Activated CD4-positive, alpha-beta T cell treated with anti-CD3 and anti-CD28 coated beads for 36 hours (primary cell): ENCODE measurements at regions of chr2 and their contacts with region 1.

Region 1: GRCh38 chr2:128090945-128091725 is at the start of gene UGGT1:
- DNase-seq: peak; percentile 96
- ATAC-seq: peak; percentile 95
- H3K4me3 Mint-ChIP-seq: peak within 1 kb of the TSS; percentile 90
- H3K27ac Mint-ChIP-seq: peak within 1 kb of the TSS; percentile 93
- H3K4me1 Mint-ChIP-seq: peaks cover 44% of the 10 kb centered on the region
- H3K27me3 Mint-ChIP-seq: no peaks in the 10 kb centered on the region
- total RNA-seq, gene UGGT1: 50.0 to 67.2 TPM

Region 2: DNA sequence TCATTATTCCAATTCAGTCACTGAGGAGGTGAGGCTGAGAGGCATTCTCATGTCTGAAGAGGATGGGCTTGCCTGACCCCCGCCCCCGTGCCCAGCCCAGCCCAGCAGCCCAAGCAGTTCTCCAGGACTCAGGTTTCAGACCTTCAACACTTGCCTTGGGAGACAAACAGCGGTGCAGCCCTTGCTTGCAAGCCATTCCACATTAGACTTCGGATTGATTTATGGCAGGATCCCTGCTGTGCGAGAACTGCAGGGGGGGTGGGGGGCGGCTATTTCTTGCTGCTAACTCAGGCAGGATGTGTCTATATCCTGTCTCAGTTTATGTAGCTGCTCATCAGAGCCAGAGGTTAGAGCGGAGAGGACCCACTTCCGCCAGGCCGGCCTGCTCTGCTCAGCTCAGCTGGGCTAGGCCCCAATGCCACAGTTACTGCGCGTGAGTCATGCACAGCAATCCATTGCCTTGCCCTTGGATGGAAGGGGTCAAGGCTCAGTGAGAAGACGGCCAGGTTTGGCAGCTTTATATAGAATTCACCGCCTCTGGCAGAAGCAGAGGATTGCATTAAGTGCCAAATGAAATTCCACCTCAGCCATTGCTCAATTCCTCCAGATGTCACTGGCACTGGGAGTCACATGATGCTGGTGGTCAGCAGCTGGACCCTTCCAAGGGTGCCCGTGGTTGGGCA is 1433.4 kb before region 1 on chr2:
- CTCF ChIA-PET with region 1: no interaction called
- POLR2A ChIA-PET with region 1: no interaction called
- intact Hi-C with region 1: loop called in 1 of 2 experiments (anchors 5 kb)
- DNase-seq: peak; percentile 87
- ATAC-seq: peak; percentile 67
- H3K4me3 Mint-ChIP-seq: peak overlapping the region; percentile 97
- H3K27ac Mint-ChIP-seq: peak overlapping the region; percentile 99
- H3K4me1 Mint-ChIP-seq: peaks cover 59% of the 10 kb centered on the region
- H3K27me3 Mint-ChIP-seq: no peaks in the 10 kb centered on the region

Region 3: GRCh38 chr2:127293748-127294562 is 797.2 kb before region 1 on chr2 and contains the start of gene ERCC3:
- CTCF ChIA-PET with region 1: no interaction called
- POLR2A ChIA-PET with region 1: no interaction called
- intact Hi-C with region 1: loop called in 1 of 2 experiments (anchors 10 kb)
- DNase-seq: peak; percentile 90
- ATAC-seq: peak; percentile 98
- H3K4me3 Mint-ChIP-seq: peak within 1 kb of the TSS; percentile 98
- H3K27ac Mint-ChIP-seq: peak within 1 kb of the TSS; percentile 100
- H3K4me1 Mint-ChIP-seq: peaks cover 20% of the 10 kb centered on the region
- H3K27me3 Mint-ChIP-seq: no peaks in the 10 kb centered on the region
- total RNA-seq, gene ERCC3: 49.5 to 49.8 TPM

Region 4: DNA sequence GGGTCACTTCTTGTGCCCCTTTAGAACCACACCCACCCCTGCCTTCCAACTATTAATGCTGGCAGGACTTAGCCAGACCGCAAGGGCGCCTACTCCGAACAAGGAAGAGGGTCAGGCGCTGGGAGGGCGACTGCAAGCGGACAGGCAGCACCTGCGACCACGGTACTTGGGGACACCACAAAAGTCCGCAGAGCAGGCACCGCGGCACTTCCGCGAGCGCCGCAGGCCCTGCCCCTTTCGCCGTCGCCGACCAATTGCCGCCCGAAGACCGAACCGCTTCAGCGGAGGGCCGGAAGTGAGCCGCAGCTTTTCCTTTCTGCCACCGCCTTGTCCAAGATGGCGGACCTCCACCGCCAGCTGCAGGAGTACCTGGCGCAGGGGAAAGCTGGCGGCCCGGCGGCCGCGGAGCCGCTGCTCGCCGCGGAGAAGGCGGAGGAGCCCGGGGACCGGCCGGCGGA is 389.9 kb before region 1 on chr2 and contains the start of gene SFT2D3:
- CTCF ChIA-PET with region 1: no interaction called
- POLR2A ChIA-PET with region 1: no interaction called
- intact Hi-C with region 1: loop called (anchors 1 to 5 kb)
- DNase-seq: peak; percentile 95
- ATAC-seq: peak; percentile 87
- H3K4me3 Mint-ChIP-seq: peak within 1 kb of the TSS; percentile 88
- H3K27ac Mint-ChIP-seq: peak within 1 kb of the TSS; percentile 95
- H3K4me1 Mint-ChIP-seq: peaks cover 34% of the 10 kb centered on the region
- H3K27me3 Mint-ChIP-seq: no peaks in the 10 kb centered on the region
- total RNA-seq, gene SFT2D3: 2.8 to 3.1 TPM

Region 5: GRCh38 chr2:127810619-127811396 is 280.3 kb before region 1 on chr2 and contains the start of gene WDR33:
- CTCF ChIA-PET with region 1: no interaction called
- POLR2A ChIA-PET with region 1: interaction called, 3 read pairs
- intact Hi-C with region 1: loop called in 1 of 2 experiments (anchors 1 kb)
- DNase-seq: peak; percentile 97
- ATAC-seq: peak; percentile 99
- H3K4me3 Mint-ChIP-seq: peak within 1 kb of the TSS; percentile 98
- H3K27ac Mint-ChIP-seq: peak within 1 kb of the TSS; percentile 99
- H3K4me1 Mint-ChIP-seq: peaks cover 42% of the 10 kb centered on the region
- H3K27me3 Mint-ChIP-seq: no peaks in the 10 kb centered on the region
- total RNA-seq, gene WDR33: 58.6 to 76.3 TPM

Region 6: GRCh38 chr2:127857265-127857808 is 233.8 kb before region 1 on chr2:
- CTCF ChIA-PET with region 1: no interaction called
- POLR2A ChIA-PET with region 1: no interaction called
- intact Hi-C with region 1: loop called (anchors 1 to 2 kb)
- DNase-seq: peak; percentile 39
- ATAC-seq: no peak
- H3K4me3 Mint-ChIP-seq: peak overlapping the region; percentile 97
- H3K27ac Mint-ChIP-seq: peak overlapping the region; percentile 96
- H3K4me1 Mint-ChIP-seq: peaks cover 50% of the 10 kb centered on the region
- H3K27me3 Mint-ChIP-seq: no peaks in the 10 kb centered on the region

Region 7: DNA sequence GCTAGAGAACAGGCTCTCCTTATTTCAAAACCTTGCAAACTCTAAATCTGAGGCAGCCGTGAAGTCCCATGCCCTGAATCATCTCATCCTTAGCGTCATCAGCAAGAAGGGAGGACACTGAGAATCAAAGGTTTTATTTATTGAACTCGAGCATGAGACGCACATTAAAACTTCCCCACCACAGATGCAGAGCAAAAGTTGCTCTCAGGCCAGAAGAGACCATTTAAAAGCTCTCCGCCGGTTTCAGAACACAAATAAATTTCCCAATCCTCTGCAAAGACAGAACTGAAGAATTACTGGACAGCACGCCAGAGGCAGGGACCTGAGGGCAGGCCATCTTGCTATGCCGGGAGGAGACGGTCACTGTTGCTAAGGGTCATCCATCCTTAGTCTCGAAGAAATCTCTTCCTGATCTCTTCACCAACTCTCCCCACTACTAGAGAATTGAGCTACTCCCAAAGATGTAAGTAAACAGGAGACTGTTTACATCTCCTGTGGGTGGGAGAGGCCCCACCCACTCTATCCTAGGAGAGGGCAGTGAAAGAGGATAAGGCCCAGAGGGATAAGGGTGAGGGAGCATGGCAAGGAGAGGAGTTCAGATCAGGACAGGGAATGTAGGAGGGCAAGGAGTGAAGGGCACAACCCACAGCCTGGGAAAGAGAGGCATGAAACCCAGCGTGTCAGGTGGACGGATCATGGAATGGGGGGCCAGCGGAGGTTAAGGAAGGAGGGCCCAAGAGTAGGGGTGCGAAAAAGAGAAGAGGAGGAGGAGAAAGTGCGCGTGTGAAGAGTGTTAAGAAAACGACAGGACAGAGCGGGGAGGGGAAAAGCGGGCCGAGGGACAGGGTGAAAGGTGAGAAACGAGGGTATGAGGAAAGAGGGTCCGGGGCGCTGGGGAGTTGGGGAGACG is 206.4 kb before region 1 on chr2:
- CTCF ChIA-PET with region 1: no interaction called
- POLR2A ChIA-PET with region 1: no interaction called
- intact Hi-C with region 1: loop called (anchors 1 to 10 kb)
- DNase-seq: no peak
- ATAC-seq: no peak
- H3K4me3 Mint-ChIP-seq: peak overlapping the region; percentile 88
- H3K27ac Mint-ChIP-seq: peak overlapping the region; percentile 85
- H3K4me1 Mint-ChIP-seq: peaks cover 57% of the 10 kb centered on the region
- H3K27me3 Mint-ChIP-seq: no peaks in the 10 kb centered on the region